Aorta (tissue), 5 donors: ENCODE measurements at regions of chr9 and their contacts with region 1.

Region 1: GRCh38 chr9:86282077-86282978 is at the start of gene ISCA1:
- DNase-seq: peak; percentile 98 to 99
- ATAC-seq: peak; percentile 99
- H3K4me3 ChIP-seq: peak within 1 kb of the TSS; percentile 57 to 68
- H3K27ac ChIP-seq: peak within 1 kb of the TSS in 1 of 2 donors; percentile 72
- H3K4me1 ChIP-seq: no peaks in the 10 kb centered on the region
- H3K27me3 ChIP-seq: no peaks in the 10 kb centered on the region
- total RNA-seq, gene ISCA1: 24.1 to 25.1 TPM

Region 2: DNA sequence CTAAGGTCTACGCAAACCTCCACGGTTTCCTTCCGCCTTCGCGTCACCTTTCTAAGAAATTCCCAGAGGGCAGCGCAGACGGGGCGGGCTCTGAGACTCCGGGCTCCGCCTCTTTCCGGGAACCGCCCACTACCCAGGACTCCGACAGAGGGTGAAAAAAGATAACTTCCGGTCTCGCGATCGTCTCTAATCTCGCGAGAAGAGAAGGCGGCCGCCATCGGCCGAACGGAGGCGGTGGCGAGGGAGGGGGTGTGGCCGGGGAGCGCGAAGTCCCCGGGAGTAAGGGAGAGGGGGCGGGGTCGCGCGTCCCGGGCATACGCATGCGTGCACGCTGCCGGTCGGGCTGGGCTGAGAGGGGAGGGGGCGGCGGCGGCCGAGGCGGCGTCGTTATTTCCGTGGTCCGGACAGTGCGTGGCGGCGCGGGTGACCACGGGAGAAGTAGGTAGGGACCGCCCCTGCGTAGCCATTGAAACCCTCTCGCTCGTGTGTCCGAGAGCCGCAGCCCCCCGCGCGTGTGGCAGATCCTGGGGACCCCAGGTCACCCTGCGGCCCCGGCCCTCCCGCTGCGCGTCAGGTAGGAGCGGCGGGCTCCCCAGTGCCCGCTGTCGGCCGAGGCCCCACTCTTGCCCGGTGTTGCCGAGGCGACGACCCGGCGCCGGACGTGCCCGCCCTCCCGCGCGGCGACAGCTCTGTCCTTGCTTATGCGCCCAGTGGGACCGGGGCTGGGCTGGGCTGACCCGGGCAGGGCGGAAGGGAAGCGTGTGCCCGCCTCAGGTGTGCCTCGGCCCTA is 341.3 kb before region 1 on chr9 and contains the start of gene NAA35:
- intact Hi-C with region 1: loop called in 1 of 2 experiments (anchors 2 kb)
- DNase-seq: peak; percentile 99
- ATAC-seq: peak; percentile 99
- H3K4me3 ChIP-seq: peak within 1 kb of the TSS; percentile 86 to 93
- H3K27ac ChIP-seq: peak within 1 kb of the TSS; percentile 52 to 83
- H3K4me1 ChIP-seq: peaks cover 0 to 11% of the 10 kb centered on the region in 2 donors
- H3K27me3 ChIP-seq: no peaks in the 10 kb centered on the region
- total RNA-seq, gene NAA35: 22.8 to 23.5 TPM

Region 3: GRCh38 chr9:86315086-86315485 is 32.8 kb after region 1 on chr9:
- intact Hi-C with region 1: no loop called
- DNase-seq: no peak
- ATAC-seq: no peak
- H3K4me3 ChIP-seq: no peak overlapping the region
- H3K27ac ChIP-seq: no peak overlapping the region
- H3K4me1 ChIP-seq: no peaks in the 10 kb centered on the region
- H3K27me3 ChIP-seq: no peaks in the 10 kb centered on the region

Region 4: DNA sequence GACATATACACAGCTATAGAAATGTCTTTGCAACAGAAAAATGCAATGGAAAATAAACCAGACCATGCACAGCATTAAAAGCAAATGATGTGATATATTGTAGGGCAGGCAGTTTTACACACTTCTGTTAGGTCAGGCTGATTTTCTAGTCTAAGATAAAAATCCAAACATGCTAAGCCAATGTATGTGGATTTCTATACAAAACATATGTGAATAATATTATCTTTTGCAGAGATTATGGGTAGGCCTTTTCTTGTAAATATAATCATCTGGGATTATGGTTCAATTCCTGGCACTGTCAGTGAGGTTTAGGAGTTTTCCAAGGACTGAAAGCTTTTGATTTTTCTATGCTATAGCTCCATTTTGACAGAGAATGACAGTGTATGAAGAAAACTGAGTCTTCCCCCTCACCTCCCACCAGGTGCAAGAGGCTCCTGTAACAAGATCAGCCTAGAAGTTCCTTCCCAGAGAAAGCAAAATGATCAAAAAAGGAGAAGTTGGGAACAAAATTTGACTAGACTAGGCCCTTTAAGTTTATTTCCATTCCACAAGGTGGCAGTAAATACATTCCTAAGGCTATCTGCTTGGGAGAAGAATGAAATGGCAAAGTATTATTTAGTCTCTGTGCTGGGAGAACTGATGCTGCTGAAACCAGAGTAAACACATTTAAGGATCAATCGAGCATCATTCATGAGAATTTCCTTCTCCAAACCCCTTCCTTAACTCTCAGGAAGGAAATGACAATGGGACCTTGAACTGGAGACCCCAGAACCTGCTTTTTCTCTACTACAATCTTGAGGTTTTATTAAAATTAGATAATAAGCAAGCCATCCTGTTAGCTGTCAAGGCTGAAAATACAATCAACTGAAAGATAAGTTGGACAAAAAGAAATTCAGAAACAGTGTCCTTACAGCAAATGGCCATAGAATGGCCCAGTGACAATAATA is 204.8 kb after region 1 on chr9:
- intact Hi-C with region 1: no loop called
- DNase-seq: no peak
- ATAC-seq: peak; percentile 79
- H3K4me3 ChIP-seq: no peak overlapping the region
- H3K27ac ChIP-seq: no peak overlapping the region
- H3K4me1 ChIP-seq: no peaks in the 10 kb centered on the region
- H3K27me3 ChIP-seq: no peaks in the 10 kb centered on the region

Region 5: DNA sequence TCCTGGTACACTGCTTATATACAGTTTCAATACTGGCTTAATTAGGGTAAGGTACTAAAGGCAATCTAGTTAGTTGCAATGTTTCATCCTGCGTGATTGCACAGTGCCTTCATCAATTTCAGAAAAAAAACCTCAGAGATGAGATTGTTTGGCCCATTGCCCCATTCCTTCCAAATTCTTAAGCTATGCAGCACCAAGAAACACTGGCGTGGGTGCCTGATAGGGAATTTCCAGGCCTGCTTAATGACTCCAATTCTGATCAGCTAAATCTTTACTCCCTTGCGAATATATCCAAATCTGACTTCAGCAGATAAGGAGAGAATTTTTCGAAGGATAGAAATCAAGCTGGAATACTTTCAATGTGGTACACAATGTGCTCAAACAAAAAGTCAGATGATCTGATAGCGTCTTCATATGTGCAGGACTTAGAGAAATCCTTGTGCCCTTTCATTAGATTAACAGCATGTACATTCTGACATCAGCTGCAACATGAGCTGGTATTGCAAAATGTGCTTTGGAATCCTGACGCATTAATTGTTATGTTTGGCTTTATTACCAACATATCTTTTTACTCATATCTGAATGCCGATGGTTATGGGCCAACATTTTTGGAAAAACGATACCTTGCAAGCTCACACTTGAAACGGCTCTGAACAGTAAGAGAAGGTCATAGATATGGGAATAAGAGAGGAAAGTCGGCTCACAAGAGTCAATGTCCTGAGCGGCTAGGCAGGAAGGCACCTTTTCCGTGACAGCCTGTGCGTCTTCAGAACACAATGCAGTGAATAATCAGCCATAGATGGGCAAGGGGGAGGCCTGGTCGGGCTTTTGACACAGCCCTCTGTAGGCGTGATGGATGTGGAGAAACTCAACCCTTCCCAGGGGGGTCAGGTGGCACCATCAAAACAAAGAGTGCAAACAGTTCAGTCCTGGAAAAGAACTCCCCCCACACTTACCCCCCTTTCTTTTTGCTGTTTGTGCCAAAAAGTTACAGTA is 701.2 kb after region 1 on chr9:
- intact Hi-C with region 1: no loop called
- DNase-seq: no peak
- ATAC-seq: peak; percentile 64
- H3K4me3 ChIP-seq: no peak overlapping the region
- H3K27ac ChIP-seq: no peak overlapping the region
- H3K4me1 ChIP-seq: no peaks in the 10 kb centered on the region
- H3K27me3 ChIP-seq: no peaks in the 10 kb centered on the region